ENCODE measurements at regions of chr6 and their contacts with region 1.

Region 1: DNA sequence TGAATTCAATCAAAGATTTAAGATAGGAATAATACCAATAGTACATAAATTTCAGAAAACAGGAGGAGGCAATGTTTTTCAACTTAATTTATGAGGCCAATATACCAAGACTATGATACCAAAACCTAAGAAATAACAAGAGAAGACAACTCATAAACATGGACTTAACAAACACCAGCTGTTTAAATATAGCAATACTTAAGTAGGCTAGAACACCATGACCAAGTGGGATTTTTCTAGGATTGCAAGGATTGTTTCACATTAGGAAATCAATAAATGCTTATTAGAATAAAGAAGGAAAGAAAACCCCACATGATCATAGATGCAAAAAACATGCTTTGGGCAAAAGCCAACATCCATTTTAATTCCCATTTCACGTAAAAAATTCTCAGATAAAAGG is 355.1 kb downstream of the EPM2A start:
- DNase-seq: no peak
- H3K4me3 ChIP-seq: no peak overlapping the region
- H3K27ac ChIP-seq: no peak overlapping the region
- H3K4me1 ChIP-seq: no peaks in the 10 kb centered on the region
- H3K27me3 ChIP-seq: no peaks in the 10 kb centered on the region
- CTCF ChIP-seq: no peak

Region 2: GRCh38 chr6:145423922-145424321 is 43.7 kb after region 1 on chr6:
- CTCF ChIA-PET with region 1: no interaction called
- dilution Hi-C with region 1: no loop called
- in situ Hi-C with region 1: no loop called
- intact Hi-C with region 1: loop called (anchors 5 kb)
- DNase-seq: no peak
- H3K4me3 ChIP-seq: no peak overlapping the region
- H3K27ac ChIP-seq: no peak overlapping the region
- H3K4me1 ChIP-seq: no peaks in the 10 kb centered on the region
- H3K27me3 ChIP-seq: no peaks in the 10 kb centered on the region
- CTCF ChIP-seq: no peak